AG04449 (cell line): ENCODE measurements at regions of chr13 and their contacts with region 1.

Region 1: DNA sequence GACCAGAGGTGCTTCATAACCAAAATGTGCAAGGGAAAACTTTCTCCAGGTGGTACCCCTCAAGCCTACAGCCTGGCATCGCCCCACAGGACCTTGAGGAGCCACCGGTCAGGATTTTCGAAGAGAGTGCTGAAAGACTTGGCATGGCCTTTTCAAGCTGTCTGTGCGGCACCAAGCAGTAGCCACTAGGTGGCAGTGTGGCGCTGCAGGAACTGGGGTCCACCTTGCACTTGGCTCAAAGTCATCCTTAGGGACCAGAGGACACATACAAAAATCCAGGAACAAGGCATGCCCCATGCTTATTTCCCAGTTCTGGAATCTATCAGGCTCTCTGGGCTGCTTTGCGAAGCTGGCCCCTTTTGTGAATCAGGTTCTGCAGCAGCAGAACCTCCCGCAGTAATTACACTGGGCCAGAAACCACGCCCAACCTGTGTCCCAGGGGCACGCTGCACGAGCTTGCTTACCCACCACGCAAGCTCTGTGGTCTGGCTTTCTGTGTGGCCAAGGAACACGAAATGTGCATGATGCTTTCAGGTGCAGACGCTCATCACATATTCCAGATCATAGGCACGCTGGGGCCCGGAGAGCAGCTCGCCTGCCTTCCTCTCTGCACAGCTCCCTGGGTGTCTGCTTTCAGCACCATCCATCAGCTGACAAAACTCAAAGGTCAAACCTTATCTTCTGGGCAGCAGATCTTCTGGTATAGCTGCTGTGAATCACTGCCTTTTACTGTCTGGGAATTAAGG is 87.2 kb downstream of the SLC7A1 start:
- DNase-seq: peak; percentile 40
- H3K4me3 ChIP-seq: no peak overlapping the region
- CTCF ChIP-seq: peak; percentile 93

Region 2: DNA sequence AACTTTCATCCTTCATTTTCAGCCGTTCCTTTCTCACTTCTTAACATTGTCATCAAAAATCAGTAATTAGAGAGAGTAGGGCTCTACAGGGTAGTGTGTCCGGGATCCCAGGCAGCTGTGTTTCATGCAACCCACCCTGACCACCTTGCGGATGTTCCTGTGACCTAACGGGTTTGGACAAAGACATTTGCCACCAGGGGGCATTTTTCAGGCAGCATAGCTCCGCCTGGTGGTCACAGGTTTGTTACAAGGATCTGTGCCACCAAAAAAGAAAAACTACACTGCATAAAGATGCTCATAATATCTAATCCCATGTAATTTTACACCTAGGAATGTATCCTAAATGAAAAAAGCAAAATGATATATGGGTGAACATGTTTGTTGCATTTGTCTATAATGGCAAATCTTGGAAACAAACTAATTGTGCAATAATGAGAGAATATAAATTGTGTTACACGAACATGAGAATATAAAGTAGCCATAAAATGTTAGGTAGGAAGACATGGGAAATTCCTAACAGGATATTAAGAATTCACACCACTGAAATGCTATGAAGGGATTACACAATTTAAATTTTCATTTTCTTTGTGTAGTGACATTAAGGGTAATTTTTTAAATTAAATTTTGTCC is 35.9 kb before region 1 on chr13:
- CTCF ChIA-PET with region 1: interaction called, 14 read pairs
- POLR2A ChIA-PET with region 1: no interaction called
- DNase-seq: no peak
- H3K4me3 ChIP-seq: no peak overlapping the region
- CTCF ChIP-seq: peak; percentile 99

Region 3: GRCh38 chr13:29496240-29496712 is 12.0 kb before region 1 on chr13:
- CTCF ChIA-PET with region 1: interaction called, 64 read pairs
- POLR2A ChIA-PET with region 1: no interaction called
- DNase-seq: no peak
- H3K4me3 ChIP-seq: no peak overlapping the region
- CTCF ChIP-seq: no peak

Region 4: GRCh38 chr13:29529754-29530153 is 21.5 kb after region 1 on chr13:
- CTCF ChIA-PET with region 1: interaction called, 10 read pairs
- POLR2A ChIA-PET with region 1: no interaction called
- DNase-seq: no peak
- H3K4me3 ChIP-seq: no peak overlapping the region
- CTCF ChIP-seq: no peak

Region 5: DNA sequence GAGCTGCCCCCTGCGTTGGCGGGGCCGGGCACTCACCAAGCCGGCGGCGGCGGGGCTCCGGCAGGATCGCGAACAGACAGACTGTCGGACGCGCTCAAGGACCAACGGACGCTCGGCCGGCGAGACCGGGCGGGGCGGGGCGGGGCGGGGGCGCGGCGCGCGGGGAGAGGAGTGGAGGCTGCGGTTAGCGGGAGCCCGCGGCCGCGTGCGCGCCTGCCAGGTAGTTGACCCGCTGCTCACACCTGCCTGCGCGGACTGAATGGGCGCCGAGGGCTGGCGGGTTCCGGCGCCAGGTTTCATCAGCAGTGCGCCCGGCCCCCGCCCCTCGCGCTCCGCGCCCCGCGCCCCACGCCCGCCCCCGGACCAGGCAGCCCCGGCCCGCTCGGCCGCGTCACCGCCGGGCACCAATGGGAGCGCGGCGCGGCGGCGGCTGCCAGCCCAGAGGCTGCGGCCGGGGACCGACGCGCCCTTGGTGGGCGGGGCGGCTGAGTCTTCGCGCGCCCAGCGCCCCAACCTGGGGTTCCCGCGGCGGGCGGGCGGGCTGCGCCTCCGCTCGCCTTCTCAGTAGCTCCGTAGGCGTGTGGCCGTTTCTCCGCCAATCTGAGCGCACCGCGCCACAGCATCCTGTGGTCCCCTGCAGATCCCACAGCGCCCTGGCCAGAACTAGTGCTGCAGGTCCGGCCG is 87.2 kb after region 1 on chr13 and contains the start of gene SLC7A1:
- CTCF ChIA-PET with region 1: interaction called, 13 read pairs
- POLR2A ChIA-PET with region 1: no interaction called
- DNase-seq: no peak
- H3K4me3 ChIP-seq: peak within 1 kb of the TSS; percentile 84
- CTCF ChIP-seq: no peak

Region 6: GRCh38 chr13:29713839-29714238 is 205.5 kb after region 1 on chr13:
- CTCF ChIA-PET with region 1: interaction called, 278 read pairs
- POLR2A ChIA-PET with region 1: no interaction called
- DNase-seq: no peak
- H3K4me3 ChIP-seq: no peak overlapping the region
- CTCF ChIP-seq: peak; percentile 31

Region 7: GRCh38 chr13:29758531-29759114 is 250.3 kb after region 1 on chr13:
- CTCF ChIA-PET with region 1: interaction called, 20 read pairs
- POLR2A ChIA-PET with region 1: no interaction called
- DNase-seq: no peak
- H3K4me3 ChIP-seq: no peak overlapping the region
- CTCF ChIP-seq: no peak

Region 8: GRCh38 chr13:29884671-29885430 is 376.5 kb after region 1 on chr13:
- CTCF ChIA-PET with region 1: no interaction called
- POLR2A ChIA-PET with region 1: no interaction called
- DNase-seq: no peak
- H3K4me3 ChIP-seq: no peak overlapping the region
- CTCF ChIP-seq: no peak